ENCODE measurements at regions of chr22 and their contacts with region 1.

Region 1: DNA sequence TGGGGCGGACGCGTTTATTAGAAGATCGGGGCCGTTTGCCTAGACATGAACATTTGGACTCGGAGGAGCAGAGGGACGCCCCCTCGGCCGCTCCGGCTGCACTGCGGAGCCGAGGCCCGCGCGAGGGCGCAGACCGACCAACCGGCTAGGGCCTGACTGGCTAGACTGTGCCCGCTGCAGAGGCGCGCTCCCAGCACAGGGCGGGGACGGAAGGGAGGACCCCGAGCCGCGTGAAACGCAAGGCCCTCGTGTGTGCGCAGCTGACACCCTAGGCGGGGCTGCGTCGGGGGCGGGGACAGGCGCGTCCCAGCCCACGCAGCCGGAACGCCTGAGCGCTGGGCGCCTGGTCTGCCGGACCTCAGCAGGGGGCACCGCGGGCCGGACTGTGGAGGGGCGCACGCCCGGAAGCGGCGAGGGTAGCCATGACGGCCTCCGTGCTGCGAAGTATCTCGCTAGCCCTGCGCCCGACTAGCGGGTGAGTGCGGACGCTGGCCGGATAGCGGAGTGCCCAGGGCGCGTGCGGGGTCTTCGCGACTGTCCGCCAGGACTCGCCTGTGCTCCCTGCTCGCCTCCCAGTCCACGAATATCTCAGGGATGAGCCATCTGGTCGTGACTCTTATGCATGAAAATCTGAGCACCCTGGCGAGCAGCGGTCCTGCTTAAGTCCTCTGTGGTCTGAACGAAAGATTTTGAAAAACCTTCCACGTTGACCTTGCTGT is at the start of gene MRPL40:
- DNase-seq: peak; percentile 92
- ATAC-seq: peak; percentile 86
- H3K4me3 Mint-ChIP-seq: peak within 1 kb of the TSS; percentile 81
- H3K27ac Mint-ChIP-seq: peak within 1 kb of the TSS; percentile 94
- H3K4me1 Mint-ChIP-seq: peaks cover 38% of the 10 kb centered on the region
- H3K27me3 Mint-ChIP-seq: no peaks in the 10 kb centered on the region
- total RNA-seq, gene MRPL40: 26.8 to 29.5 TPM

Region 2: DNA sequence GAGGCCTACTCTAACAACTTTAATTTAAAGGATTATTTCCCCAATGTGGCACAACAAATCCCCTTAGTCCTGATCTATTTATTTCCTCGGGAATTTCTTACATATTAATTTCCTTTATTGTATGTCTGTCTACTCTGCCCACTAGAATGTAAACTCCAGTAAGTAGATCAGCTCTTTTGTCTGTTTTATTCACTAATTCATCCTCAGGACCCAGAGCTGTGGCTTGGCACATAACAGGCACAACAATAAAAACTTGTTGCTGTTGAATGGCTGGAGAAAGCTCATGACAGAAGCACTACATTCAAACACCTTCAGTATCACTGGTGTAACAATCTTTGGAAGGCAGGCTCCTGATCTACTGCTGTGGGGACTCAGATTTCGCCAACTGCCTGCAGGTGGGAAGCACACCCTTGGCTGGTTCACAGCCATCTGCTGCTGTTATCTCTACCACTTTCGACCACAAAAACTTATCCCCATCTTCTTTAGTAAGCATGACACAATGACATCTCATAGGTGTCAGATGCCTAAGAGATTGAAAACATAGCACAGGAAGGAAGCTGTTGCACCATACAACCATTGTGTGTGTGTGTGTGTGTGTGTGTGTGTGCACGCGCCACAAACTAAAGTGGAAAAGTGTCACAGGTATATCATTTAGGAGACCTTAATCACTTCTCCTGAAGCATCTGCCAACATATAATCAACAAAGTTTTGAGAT is 12.7 kb before region 1 on chr22:
- CTCF ChIA-PET with region 1: interaction called, 4 read pairs
- POLR2A ChIA-PET with region 1: interaction called, 49 read pairs
- DNase-seq: peak; percentile 64
- ATAC-seq: peak; percentile 93
- H3K4me3 Mint-ChIP-seq: peak overlapping the region; percentile 32
- H3K27ac Mint-ChIP-seq: peak overlapping the region; percentile 89
- H3K4me1 Mint-ChIP-seq: peaks cover 59% of the 10 kb centered on the region
- H3K27me3 Mint-ChIP-seq: no peaks in the 10 kb centered on the region

Region 3: GRCh38 chr22:19447388-19448075 is 15.2 kb after region 1 on chr22 and contains the start of gene C22orf39:
- CTCF ChIA-PET with region 1: interaction called, 3 read pairs
- POLR2A ChIA-PET with region 1: interaction called, 67 read pairs
- DNase-seq: peak; percentile 93
- ATAC-seq: peak; percentile 93
- H3K4me3 Mint-ChIP-seq: peak within 1 kb of the TSS; percentile 88
- H3K27ac Mint-ChIP-seq: peak within 1 kb of the TSS; percentile 94
- H3K4me1 Mint-ChIP-seq: peaks cover 39% of the 10 kb centered on the region
- H3K27me3 Mint-ChIP-seq: no peaks in the 10 kb centered on the region
- total RNA-seq, gene C22orf39: 33.9 to 35.0 TPM

Region 4: GRCh38 chr22:19479357-19480172 is 47.3 kb after region 1 on chr22 and contains the start of gene CDC45:
- CTCF ChIA-PET with region 1: interaction called, 3 read pairs
- POLR2A ChIA-PET with region 1: interaction called, 20 read pairs
- DNase-seq: peak; percentile 98
- ATAC-seq: peak; percentile 94
- H3K4me3 Mint-ChIP-seq: peak within 1 kb of the TSS; percentile 99
- H3K27ac Mint-ChIP-seq: peak within 1 kb of the TSS; percentile 98
- H3K4me1 Mint-ChIP-seq: peaks cover 30% of the 10 kb centered on the region
- H3K27me3 Mint-ChIP-seq: no peaks in the 10 kb centered on the region
- total RNA-seq, gene CDC45: 90.2 to 94.3 TPM

Region 5: GRCh38 chr22:19648419-19648929 is 216.2 kb after region 1 on chr22:
- CTCF ChIA-PET with region 1: no interaction called
- POLR2A ChIA-PET with region 1: no interaction called
- DNase-seq: no peak
- ATAC-seq: no peak
- H3K4me3 Mint-ChIP-seq: no peak overlapping the region
- H3K27ac Mint-ChIP-seq: no peak overlapping the region
- H3K4me1 Mint-ChIP-seq: no peaks in the 10 kb centered on the region
- H3K27me3 Mint-ChIP-seq: peaks cover 30% of the 10 kb centered on the region

Measured in activated CD8-positive, alpha-beta T cell treated with anti-CD3 and anti-CD28 coated beads, Interleukin-2, amount 10 ng/mL, durations not matched to agents 7 days and 5 days (primary cell).